Activated CD4-positive, alpha-beta T cell treated with anti-CD3 and anti-CD28 coated beads, Interleukin-2, amount 10 ng/mL, durations not matched to agents 24 days and 14 days (primary cell): ENCODE measurements at regions of chr3 and their contacts with region 1.

Region 1: DNA sequence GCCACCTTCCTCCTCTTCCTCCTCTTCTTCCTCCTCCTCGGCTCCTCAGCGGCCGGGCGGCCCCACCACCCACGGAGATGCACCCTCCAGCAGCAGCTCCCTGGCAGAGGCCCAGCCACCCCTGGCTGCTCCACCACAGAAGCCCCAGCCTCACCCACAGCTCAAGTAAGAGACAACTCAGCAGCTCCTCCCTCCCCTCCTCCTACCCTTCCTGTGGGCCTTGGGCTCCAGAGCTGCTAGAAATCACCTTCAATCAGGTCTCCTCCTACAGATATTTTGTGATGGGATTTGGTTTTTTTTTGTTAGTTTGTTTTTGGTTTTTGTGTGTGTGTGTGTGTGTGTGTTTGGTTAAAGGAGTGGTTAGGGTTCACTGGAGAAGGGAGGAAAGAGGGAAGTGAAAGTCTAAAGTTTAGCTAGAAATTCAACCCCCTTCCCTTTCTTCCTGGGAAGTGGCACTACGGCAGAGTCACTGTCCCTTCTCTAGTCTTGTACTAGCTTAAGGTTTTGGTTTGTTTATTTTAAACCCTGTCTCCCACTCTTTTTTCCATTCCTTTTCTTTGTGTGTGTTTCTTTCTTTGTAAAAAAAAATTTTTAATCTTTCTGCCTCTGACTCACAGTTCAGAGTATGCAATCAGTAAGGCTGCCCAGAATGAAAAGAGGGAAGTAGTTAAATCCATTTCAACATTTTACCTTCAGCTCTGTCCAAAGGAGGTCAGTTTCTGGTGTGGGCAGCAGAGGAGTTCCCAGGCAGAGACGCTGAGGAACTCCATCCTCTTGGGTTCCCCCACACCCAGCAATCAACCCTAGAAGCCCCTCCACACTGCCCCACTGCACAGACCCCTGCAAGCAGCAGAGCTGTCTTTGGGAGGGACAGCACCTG is 29.0 kb upstream of the TIMP4 start:
- DNase-seq: peak; percentile 83
- H3K4me3 Mint-ChIP-seq: peak overlapping the region; percentile 62
- H3K27ac Mint-ChIP-seq: peak overlapping the region; percentile 96
- H3K4me1 Mint-ChIP-seq: peaks cover 71% of the 10 kb centered on the region
- H3K27me3 Mint-ChIP-seq: no peaks in the 10 kb centered on the region

Region 2: GRCh38 chr3:12175844-12176453 is 11.7 kb before region 1 on chr3:
- intact Hi-C with region 1: loop called (anchors 1 kb)
- DNase-seq: peak; percentile 72
- H3K4me3 Mint-ChIP-seq: no peak overlapping the region
- H3K27ac Mint-ChIP-seq: no peak overlapping the region
- H3K4me1 Mint-ChIP-seq: peaks cover 15% of the 10 kb centered on the region
- H3K27me3 Mint-ChIP-seq: no peaks in the 10 kb centered on the region

Region 3: GRCh38 chr3:12232785-12233300 is 45.2 kb after region 1 on chr3:
- intact Hi-C with region 1: loop called (anchors 2 kb)
- DNase-seq: no peak
- H3K4me3 Mint-ChIP-seq: no peak overlapping the region
- H3K27ac Mint-ChIP-seq: peak overlapping the region; percentile 75
- H3K4me1 Mint-ChIP-seq: peaks cover 5% of the 10 kb centered on the region
- H3K27me3 Mint-ChIP-seq: peaks cover 20% of the 10 kb centered on the region

Region 4: DNA sequence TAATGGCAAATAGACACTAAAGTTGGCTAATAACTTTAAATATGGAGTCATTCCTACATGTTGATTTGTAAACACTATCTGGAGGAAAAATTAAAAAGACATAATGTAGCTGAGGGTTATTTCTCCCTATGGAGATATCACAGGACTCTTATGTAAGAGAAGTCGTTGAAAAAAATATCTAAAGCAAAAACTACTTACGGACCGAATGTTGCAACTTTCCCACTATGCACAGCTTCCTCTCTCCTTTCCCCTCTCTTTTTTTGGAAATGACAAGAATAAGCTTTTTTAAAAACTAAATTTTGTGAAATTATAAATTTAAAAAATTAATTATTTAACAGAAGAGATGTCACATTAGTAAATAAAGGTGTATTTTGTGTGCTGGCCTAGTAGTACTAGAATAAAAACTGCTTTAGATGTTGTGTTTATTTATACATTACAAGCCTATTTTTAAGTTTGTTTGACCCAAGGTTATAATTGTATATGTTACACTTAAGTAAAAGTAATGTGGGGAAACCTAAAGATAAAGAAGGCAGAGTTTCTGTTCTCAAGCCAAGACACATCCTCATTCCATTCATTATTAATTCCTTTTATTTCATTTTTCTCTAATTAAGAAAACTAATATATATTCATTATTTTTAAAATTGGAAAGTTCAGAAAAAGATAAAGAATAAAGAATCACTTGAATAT is 80.5 kb after region 1 on chr3:
- intact Hi-C with region 1: no loop called
- DNase-seq: no peak
- H3K4me3 Mint-ChIP-seq: no peak overlapping the region
- H3K27ac Mint-ChIP-seq: no peak overlapping the region
- H3K4me1 Mint-ChIP-seq: no peaks in the 10 kb centered on the region
- H3K27me3 Mint-ChIP-seq: peaks cover 34% of the 10 kb centered on the region

Region 5: GRCh38 chr3:12287727-12288191 is 100.1 kb after region 1 on chr3:
- intact Hi-C with region 1: loop called (anchors 5 kb)
- DNase-seq: no peak
- H3K4me3 Mint-ChIP-seq: peak overlapping the region; percentile 72
- H3K27ac Mint-ChIP-seq: no peak overlapping the region
- H3K4me1 Mint-ChIP-seq: peaks cover 3% of the 10 kb centered on the region
- H3K27me3 Mint-ChIP-seq: peaks cover 66% of the 10 kb centered on the region

Region 6: GRCh38 chr3:12308517-12308916 is 120.8 kb after region 1 on chr3:
- intact Hi-C with region 1: loop called (anchors 5 kb)
- DNase-seq: no peak
- H3K4me3 Mint-ChIP-seq: no peak overlapping the region
- H3K27ac Mint-ChIP-seq: peak overlapping the region; percentile 6
- H3K4me1 Mint-ChIP-seq: peaks cover 17% of the 10 kb centered on the region
- H3K27me3 Mint-ChIP-seq: peaks cover 26% of the 10 kb centered on the region

Region 7: GRCh38 chr3:12336099-12336498 is 148.4 kb after region 1 on chr3:
- intact Hi-C with region 1: loop called (anchors 1 kb)
- DNase-seq: peak; percentile 65
- H3K4me3 Mint-ChIP-seq: peak overlapping the region; percentile 22
- H3K27ac Mint-ChIP-seq: peak overlapping the region; percentile 59
- H3K4me1 Mint-ChIP-seq: peaks cover 16% of the 10 kb centered on the region
- H3K27me3 Mint-ChIP-seq: peaks cover 3% of the 10 kb centered on the region

Region 8: GRCh38 chr3:12395349-12396012 is 207.8 kb after region 1 on chr3:
- intact Hi-C with region 1: loop called (anchors 1 kb)
- DNase-seq: peak; percentile 67
- H3K4me3 Mint-ChIP-seq: peak overlapping the region; percentile 45
- H3K27ac Mint-ChIP-seq: peak overlapping the region; percentile 73
- H3K4me1 Mint-ChIP-seq: peaks cover 9% of the 10 kb centered on the region
- H3K27me3 Mint-ChIP-seq: peaks cover 11% of the 10 kb centered on the region